PC-9 (cell line): ENCODE measurements at regions of chr16 and their contacts with region 1.

Region 1: GRCh38 chr16:89171463-89172170 is at the start of gene CDH15:
- DNase-seq: peak; percentile 86 to 96
- H3K4me3 ChIP-seq: peak within 1 kb of the TSS; percentile 46; the same call in 1 of the 2 replicates
- H3K27ac ChIP-seq: no peak within 1 kb of the TSS
- H3K4me1 ChIP-seq: peaks cover 11% of the 10 kb centered on the region
- H3K27me3 ChIP-seq: peaks cover 32% of the 10 kb centered on the region
- CTCF ChIP-seq: no peak
- total RNA-seq, gene CDH15: not detected in 2 replicates

Region 2: DNA sequence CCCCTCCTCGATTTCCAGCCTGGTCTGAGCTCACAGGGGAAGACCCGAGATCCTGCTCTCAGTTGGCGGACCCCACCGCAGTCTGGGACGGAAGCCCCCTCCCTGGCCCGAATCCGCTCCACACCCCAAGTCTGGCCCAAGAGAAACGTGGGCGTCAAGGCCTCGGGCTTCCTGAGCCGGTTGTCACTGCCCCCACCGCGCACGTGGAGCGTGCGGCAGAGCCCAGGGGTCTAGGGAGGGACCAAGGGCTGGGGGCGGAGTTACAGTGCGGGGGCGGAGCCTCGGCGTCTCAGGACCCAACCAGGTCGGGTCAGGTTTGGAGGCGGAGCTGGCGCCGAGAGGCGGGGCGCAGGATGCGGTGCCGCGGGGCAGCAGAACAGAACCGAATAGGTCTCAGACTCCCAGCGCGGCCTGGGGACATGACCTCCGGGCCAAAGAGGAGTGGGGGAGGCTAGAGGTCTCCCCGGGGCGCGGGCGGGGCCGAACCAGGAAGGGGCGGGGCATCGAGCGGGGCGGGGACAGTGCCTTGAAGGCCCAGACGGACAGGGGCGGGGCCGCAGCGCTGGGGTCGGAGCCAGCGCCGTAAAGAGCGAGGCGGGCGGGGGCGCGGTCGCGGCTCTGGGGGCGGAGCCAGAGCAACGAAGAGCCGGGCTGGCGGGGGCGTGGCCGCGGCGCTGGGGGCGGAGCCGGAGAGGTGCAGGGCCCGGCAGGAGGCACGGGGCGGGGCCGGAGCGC is 719.0 kb before region 1 on chr16:
- CTCF ChIA-PET with region 1: no interaction called
- POLR2A ChIA-PET with region 1: no interaction called
- intact Hi-C with region 1: loop called (anchors 10 kb)
- DNase-seq: peak; percentile 79 to 99
- H3K4me3 ChIP-seq: peak overlapping the region; percentile 81
- H3K27ac ChIP-seq: no peak overlapping the region
- H3K4me1 ChIP-seq: peaks cover 27% of the 10 kb centered on the region
- H3K27me3 ChIP-seq: peaks cover 17% of the 10 kb centered on the region
- CTCF ChIP-seq: no peak

Region 3: GRCh38 chr16:88941913-88942909 is 229.4 kb before region 1 on chr16:
- CTCF ChIA-PET with region 1: interaction called, 3 read pairs
- POLR2A ChIA-PET with region 1: no interaction called
- intact Hi-C with region 1: loop called (anchors 5 kb)
- DNase-seq: peak in 1 of 2 experiments; percentile 49
- H3K4me3 ChIP-seq: no peak overlapping the region
- H3K27ac ChIP-seq: no peak overlapping the region
- H3K4me1 ChIP-seq: no peaks in the 10 kb centered on the region
- H3K27me3 ChIP-seq: peaks cover 36% of the 10 kb centered on the region
- CTCF ChIP-seq: peak; percentile 46; the same call in 1 of the 2 replicates

Region 4: DNA sequence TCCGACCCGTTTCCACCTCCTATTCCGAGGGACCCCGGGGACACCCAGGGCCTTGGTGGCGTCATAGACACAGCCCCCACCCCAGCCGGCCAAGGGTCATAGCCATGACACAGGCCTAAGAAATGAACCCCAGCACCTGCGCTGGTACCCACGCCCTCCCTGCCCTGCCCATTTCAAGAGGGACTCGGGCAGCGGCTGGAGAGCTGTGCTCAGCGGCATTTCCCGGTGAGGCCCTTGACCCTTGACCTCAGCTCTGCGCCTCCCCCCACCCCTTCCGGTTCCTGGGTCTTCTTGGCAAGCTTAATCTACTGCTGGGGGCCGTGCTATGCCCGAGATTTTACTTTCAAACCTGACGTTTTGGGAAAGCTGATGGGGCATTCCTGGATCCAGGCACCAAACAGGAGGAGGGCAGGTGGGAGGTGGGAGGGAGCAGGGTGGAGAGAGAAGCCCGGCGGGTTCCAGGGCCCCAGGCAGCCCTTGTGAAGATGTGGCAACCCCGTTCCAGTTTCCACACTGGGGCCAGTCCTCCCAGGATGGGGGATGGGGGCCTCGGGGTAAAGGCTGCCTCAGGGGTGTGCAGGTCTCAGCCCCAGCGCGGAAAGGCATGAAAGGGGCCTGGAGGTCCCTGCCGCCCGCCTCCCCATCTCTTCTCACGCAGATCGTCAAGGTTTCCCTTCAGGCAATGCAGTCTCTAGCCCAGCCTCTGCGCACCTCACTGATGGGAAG is 28.7 kb after region 1 on chr16 and contains the start of gene SLC22A31:
- CTCF ChIA-PET with region 1: no interaction called
- POLR2A ChIA-PET with region 1: no interaction called
- intact Hi-C with region 1: no loop called
- DNase-seq: no peak
- H3K4me3 ChIP-seq: peak within 1 kb of the TSS; percentile 48; the same call in 1 of the 2 replicates
- H3K27ac ChIP-seq: no peak within 1 kb of the TSS
- H3K4me1 ChIP-seq: peaks cover 10% of the 10 kb centered on the region; the same call in 1 of the 2 replicates
- H3K27me3 ChIP-seq: peaks cover 10% of the 10 kb centered on the region
- CTCF ChIP-seq: no peak
- total RNA-seq, gene SLC22A31: 2.5 and 5.4 TPM in 2 replicates

Region 5: GRCh38 chr16:89217388-89218191 is 46.0 kb after region 1 on chr16 and contains the start of gene ZNF778:
- CTCF ChIA-PET with region 1: no interaction called
- POLR2A ChIA-PET with region 1: no interaction called
- intact Hi-C with region 1: loop called (anchors 1 kb)
- DNase-seq: peak; percentile 75 to 77
- H3K4me3 ChIP-seq: peak within 1 kb of the TSS; percentile 84
- H3K27ac ChIP-seq: peak within 1 kb of the TSS; percentile 53
- H3K4me1 ChIP-seq: 0 out of 2 replicates have a peak, but pooled peaks cover 5% of the 10 kb centered on the region
- H3K27me3 ChIP-seq: no peaks in the 10 kb centered on the region
- CTCF ChIP-seq: no peak
- total RNA-seq, gene ZNF778: 9.5 and 15.7 TPM in 2 replicates

Region 6: GRCh38 chr16:89560378-89561141 is 388.9 kb after region 1 on chr16 and contains the start of gene RPL13:
- CTCF ChIA-PET with region 1: no interaction called
- POLR2A ChIA-PET with region 1: interaction called, 15 read pairs
- intact Hi-C with region 1: no loop called
- DNase-seq: peak; percentile 91 to 95
- H3K4me3 ChIP-seq: peak within 1 kb of the TSS; percentile 92
- H3K27ac ChIP-seq: peak within 1 kb of the TSS; percentile 96
- H3K4me1 ChIP-seq: peaks cover 49% of the 10 kb centered on the region
- H3K27me3 ChIP-seq: no peaks in the 10 kb centered on the region
- CTCF ChIP-seq: no peak
- total RNA-seq, gene RPL13: 2,045 and 3,124 TPM in 2 replicates